ENCODE measurements at regions of chr6 and their contacts with region 1.

Region 1: GRCh38 chr6:24520929-24521546 is 26.3 kb downstream of the ALDH5A1 start:
- DNase-seq: peak; percentile 63
- H3K4me3 Mint-ChIP-seq: no peak overlapping the region
- H3K27ac Mint-ChIP-seq: no peak overlapping the region
- H3K4me1 Mint-ChIP-seq: peaks cover 9% of the 10 kb centered on the region
- H3K27me3 Mint-ChIP-seq: no peaks in the 10 kb centered on the region
- CTCF ChIP-seq: peak; percentile 55

Region 2: GRCh38 chr6:24431045-24431451 is 90.0 kb before region 1 on chr6:
- CTCF ChIA-PET with region 1: interaction called, 18 read pairs
- POLR2A ChIA-PET with region 1: interaction called, 4 read pairs
- intact Hi-C with region 1: loop called (anchors 1 kb)
- DNase-seq: peak; percentile 69
- H3K4me3 Mint-ChIP-seq: no peak overlapping the region
- H3K27ac Mint-ChIP-seq: no peak overlapping the region
- H3K4me1 Mint-ChIP-seq: peaks cover 6% of the 10 kb centered on the region
- H3K27me3 Mint-ChIP-seq: no peaks in the 10 kb centered on the region
- CTCF ChIP-seq: peak; percentile 27

Region 3: GRCh38 chr6:24494821-24495795 is 25.9 kb before region 1 on chr6 and contains the start of gene ALDH5A1:
- CTCF ChIA-PET with region 1: interaction called, 17 read pairs
- POLR2A ChIA-PET with region 1: interaction called, 4 read pairs
- intact Hi-C with region 1: no loop called
- DNase-seq: peak; percentile 50
- H3K4me3 Mint-ChIP-seq: peak within 1 kb of the TSS; percentile 69
- H3K27ac Mint-ChIP-seq: no peak within 1 kb of the TSS
- H3K4me1 Mint-ChIP-seq: no peaks in the 10 kb centered on the region
- H3K27me3 Mint-ChIP-seq: no peaks in the 10 kb centered on the region
- CTCF ChIP-seq: peak; percentile 21
- total RNA-seq, gene ALDH5A1: 1.7 and 2.0 TPM in 2 replicates

Region 4: DNA sequence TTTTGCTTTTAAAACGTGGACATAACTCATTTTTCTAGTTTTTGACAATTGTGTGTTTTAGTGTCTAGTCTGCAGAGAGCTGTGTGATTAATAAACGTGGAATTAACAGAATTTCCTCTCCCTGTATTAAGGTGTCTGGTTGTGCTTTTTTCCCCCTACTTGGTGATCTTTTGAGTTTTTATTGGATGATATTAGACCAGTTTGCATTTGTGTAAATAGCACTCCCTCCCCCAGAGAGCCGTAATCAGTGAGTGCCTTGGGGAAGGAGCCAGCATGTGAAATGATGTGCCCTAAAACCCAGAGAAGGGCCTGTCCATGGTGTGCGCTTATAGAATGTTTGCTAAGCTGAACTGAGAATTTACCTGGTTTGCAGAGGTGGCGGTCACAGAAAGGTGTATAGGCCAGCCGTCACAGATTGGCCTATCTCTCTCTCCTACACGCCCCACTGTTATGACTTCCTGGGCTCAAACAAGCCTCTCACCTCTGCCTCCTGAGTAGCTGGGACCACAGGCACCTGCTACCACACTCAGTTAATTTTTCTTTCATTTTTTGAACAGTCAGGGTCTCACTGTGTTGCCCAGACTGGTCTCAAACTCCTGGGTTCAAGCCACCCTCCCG is 16.2 kb after region 1 on chr6:
- CTCF ChIA-PET with region 1: interaction called, 10 read pairs
- POLR2A ChIA-PET with region 1: no interaction called
- intact Hi-C with region 1: no loop called
- DNase-seq: no peak
- H3K4me3 Mint-ChIP-seq: no peak overlapping the region
- H3K27ac Mint-ChIP-seq: no peak overlapping the region
- H3K4me1 Mint-ChIP-seq: no peaks in the 10 kb centered on the region
- H3K27me3 Mint-ChIP-seq: no peaks in the 10 kb centered on the region
- CTCF ChIP-seq: no peak

Region 5: DNA sequence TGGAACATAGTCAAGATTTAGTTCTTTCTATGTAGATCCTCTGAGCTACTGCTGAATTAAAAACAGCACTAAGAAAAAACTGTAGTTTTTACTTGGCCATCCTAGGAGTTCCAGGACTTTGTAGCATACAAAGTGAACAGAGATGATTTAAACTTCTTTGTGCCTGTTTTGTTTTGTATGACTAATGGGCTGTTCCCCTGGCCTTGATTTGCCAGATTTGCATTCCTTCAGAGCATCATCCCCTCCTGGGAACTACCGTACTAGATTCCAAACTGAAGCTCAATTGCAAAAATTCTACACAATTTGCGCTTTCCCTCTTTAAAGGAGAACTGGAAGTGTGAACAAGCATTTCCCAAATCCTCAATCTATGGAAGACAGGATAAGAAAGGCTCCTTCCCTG is 168.9 kb after region 1 on chr6:
- CTCF ChIA-PET with region 1: interaction called, 4 read pairs
- POLR2A ChIA-PET with region 1: no interaction called
- intact Hi-C with region 1: loop called (anchors 1 kb)
- DNase-seq: no peak
- H3K4me3 Mint-ChIP-seq: no peak overlapping the region
- H3K27ac Mint-ChIP-seq: no peak overlapping the region
- H3K4me1 Mint-ChIP-seq: peaks cover 6% of the 10 kb centered on the region
- H3K27me3 Mint-ChIP-seq: no peaks in the 10 kb centered on the region
- CTCF ChIP-seq: no peak

Region 6: GRCh38 chr6:24766680-24767462 is 245.8 kb after region 1 on chr6:
- CTCF ChIA-PET with region 1: interaction called, 4 read pairs
- POLR2A ChIA-PET with region 1: no interaction called
- intact Hi-C with region 1: loop called (anchors 1 kb)
- DNase-seq: peak; percentile 45
- H3K4me3 Mint-ChIP-seq: no peak overlapping the region
- H3K27ac Mint-ChIP-seq: no peak overlapping the region
- H3K4me1 Mint-ChIP-seq: peaks cover 11% of the 10 kb centered on the region
- H3K27me3 Mint-ChIP-seq: no peaks in the 10 kb centered on the region
- CTCF ChIP-seq: peak; percentile 58

Region 7: GRCh38 chr6:25070547-25071366 is 549.7 kb after region 1 on chr6:
- CTCF ChIA-PET with region 1: interaction called, 7 read pairs
- POLR2A ChIA-PET with region 1: no interaction called
- intact Hi-C with region 1: loop called (anchors 10 kb)
- DNase-seq: peak; percentile 86
- H3K4me3 Mint-ChIP-seq: no peak overlapping the region
- H3K27ac Mint-ChIP-seq: no peak overlapping the region
- H3K4me1 Mint-ChIP-seq: no peaks in the 10 kb centered on the region
- H3K27me3 Mint-ChIP-seq: no peaks in the 10 kb centered on the region
- CTCF ChIP-seq: peak; percentile 91